ENCODE measurements at regions of chr4 and their contacts with region 1.

Region 1: GRCh38 chr4:70651864-70652506 is 14.3 kb downstream of the JCHAIN start:
- DNase-seq: peak; percentile 52
- ATAC-seq: peak; percentile 83
- H3K4me3 ChIP-seq: peak overlapping the region; percentile 24 to 54
- H3K27ac ChIP-seq: no peak overlapping the region
- H3K4me1 ChIP-seq: peaks cover 3 to 5% of the 10 kb centered on the region in 2 experiments; a peak in 2 of 4 replicates
- H3K27me3 ChIP-seq: no peaks in the 10 kb centered on the region
- CTCF ChIP-seq: peak; percentile 26 to 74 (median 61); a peak in 4 of 6 replicates
- POLR2A ChIP-seq: no peak
- RAD21 ChIP-seq: peak; percentile 78

Region 2: DNA sequence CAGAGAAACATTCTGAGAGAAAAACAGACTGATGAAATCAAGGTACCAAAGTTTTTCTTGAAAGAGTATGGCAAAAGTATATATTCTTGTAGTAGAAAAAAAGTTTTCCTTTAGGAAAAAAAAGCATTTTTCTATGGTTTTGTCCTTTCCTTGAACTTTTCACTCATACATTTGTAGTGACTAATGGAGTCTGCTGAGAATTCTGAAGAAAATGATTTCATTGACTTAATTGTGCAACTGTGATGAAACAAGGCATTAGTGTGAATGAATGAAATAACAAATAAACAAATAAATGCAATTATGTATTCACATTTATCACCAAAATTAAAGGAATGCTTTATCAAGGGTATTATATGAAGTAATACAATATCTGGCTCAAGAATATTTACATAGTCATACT is 715.4 kb before region 1 on chr4:
- CTCF ChIA-PET with region 1: no interaction called
- POLR2A ChIA-PET with region 1: no interaction called
- RAD21 ChIA-PET with region 1: no interaction called
- intact Hi-C with region 1: no loop called
- DNase-seq: no peak
- ATAC-seq: no peak
- H3K4me3 ChIP-seq: no peak overlapping the region
- H3K27ac ChIP-seq: no peak overlapping the region
- H3K4me1 ChIP-seq: no peaks in the 10 kb centered on the region
- H3K27me3 ChIP-seq: no peaks in the 10 kb centered on the region
- CTCF ChIP-seq: no peak
- POLR2A ChIP-seq: no peak
- RAD21 ChIP-seq: no peak

Region 3: GRCh38 chr4:70505151-70505748 is 146.7 kb before region 1 on chr4:
- CTCF ChIA-PET with region 1: no interaction called
- POLR2A ChIA-PET with region 1: no interaction called
- RAD21 ChIA-PET with region 1: no interaction called
- intact Hi-C with region 1: no loop called
- DNase-seq: peak; percentile 42
- ATAC-seq: peak; percentile 93
- H3K4me3 ChIP-seq: no peak overlapping the region
- H3K27ac ChIP-seq: no peak overlapping the region
- H3K4me1 ChIP-seq: no peaks in the 10 kb centered on the region
- H3K27me3 ChIP-seq: no peaks in the 10 kb centered on the region
- CTCF ChIP-seq: peak; percentile 63 to 97 (median 97)
- POLR2A ChIP-seq: no peak
- RAD21 ChIP-seq: peak; percentile 87

Region 4: DNA sequence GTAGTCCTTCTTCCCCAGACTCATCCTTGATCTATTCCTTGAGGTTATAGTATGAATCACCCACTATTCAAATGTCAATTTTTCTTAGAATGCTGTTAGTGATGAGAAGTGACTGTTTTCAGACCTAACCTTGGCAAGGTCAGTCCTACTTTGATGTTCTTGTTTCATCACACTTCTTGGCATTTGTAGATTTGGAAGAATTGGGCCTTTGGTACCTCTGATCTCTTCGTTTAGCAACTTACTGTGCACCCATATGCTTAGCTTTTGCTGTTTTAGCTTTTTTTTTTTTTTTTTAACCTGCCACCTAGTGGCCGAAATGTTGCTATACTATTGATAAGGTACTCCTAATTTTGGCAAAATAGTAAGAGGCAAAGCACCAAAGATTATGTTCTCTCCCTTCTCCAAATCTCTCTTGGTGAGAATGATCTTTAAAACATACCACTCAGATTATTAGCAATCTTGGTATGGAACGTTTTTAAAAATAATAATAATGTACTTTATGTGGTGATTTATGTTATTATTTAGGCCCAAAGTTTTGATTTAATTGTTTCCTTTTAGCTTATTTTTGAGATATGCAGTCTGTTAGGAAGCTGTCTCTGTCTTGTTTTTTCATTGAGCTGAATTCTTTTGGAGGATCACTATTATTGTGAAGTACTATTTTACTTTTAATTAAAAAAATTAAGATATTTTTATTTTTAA is 358.1 kb after region 1 on chr4:
- CTCF ChIA-PET with region 1: interaction called, 32 read pairs
- POLR2A ChIA-PET with region 1: no interaction called
- RAD21 ChIA-PET with region 1: no interaction called
- intact Hi-C with region 1: loop called (anchors 1 kb)
- DNase-seq: peak; percentile 39
- ATAC-seq: peak; percentile 63; the same call in 1 of the 2 replicates
- H3K4me3 ChIP-seq: no peak overlapping the region
- H3K27ac ChIP-seq: no peak overlapping the region
- H3K4me1 ChIP-seq: peaks cover 0 to 6% of the 10 kb centered on the region in 2 experiments; a peak in 2 of 4 replicates
- H3K27me3 ChIP-seq: no peaks in the 10 kb centered on the region
- CTCF ChIP-seq: peak; percentile 46 to 90 (median 52); a peak in 5 of 6 replicates
- POLR2A ChIP-seq: no peak
- RAD21 ChIP-seq: peak; percentile 50

Region 5: DNA sequence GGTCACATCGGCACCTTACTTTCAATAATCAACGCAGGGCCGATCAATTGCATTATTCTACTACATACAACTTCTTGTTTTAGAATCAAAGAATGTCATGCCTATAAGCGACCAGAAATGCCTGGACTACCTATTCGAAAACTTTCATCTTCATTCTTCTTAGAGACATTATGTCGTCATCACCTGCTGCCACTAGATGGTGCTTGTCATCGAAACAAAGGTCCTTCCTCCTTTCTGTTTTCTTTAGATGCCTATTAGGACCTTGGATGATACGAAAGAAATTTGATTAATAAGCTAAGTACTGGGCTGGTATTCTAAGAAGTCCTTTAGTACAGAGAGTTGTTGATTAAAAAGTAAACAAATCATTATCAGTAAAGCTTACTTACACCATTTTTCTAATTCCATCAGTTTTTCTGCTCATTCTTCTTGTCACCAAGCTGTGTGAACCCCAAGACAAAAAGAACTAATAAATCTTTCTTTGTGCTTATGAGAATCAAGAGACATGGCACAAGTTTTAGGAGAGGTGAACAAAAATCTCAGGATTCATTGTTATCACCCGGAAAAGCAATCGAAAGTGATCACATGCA is 532.3 kb after region 1 on chr4:
- CTCF ChIA-PET with region 1: no interaction called
- POLR2A ChIA-PET with region 1: no interaction called
- RAD21 ChIA-PET with region 1: no interaction called
- intact Hi-C with region 1: loop called (anchors 10 kb)
- DNase-seq: peak; percentile 63
- ATAC-seq: peak; percentile 51
- H3K4me3 ChIP-seq: no peak overlapping the region
- H3K27ac ChIP-seq: no peak overlapping the region
- H3K4me1 ChIP-seq: peaks cover 0 to 5% of the 10 kb centered on the region in 2 experiments; a peak in 1 of 4 replicates
- H3K27me3 ChIP-seq: peaks cover 15% of the 10 kb centered on the region; the same call in 1 of the 2 replicates
- CTCF ChIP-seq: peak; percentile 28 to 69 (median 57); a peak in 5 of 6 replicates
- POLR2A ChIP-seq: no peak
- RAD21 ChIP-seq: peak; percentile 54

Region 6: GRCh38 chr4:71553605-71554004 is 901.6 kb after region 1 on chr4:
- CTCF ChIA-PET with region 1: no interaction called
- POLR2A ChIA-PET with region 1: no interaction called
- RAD21 ChIA-PET with region 1: no interaction called
- intact Hi-C with region 1: loop called (anchors 2 kb)
- DNase-seq: peak; percentile 10
- ATAC-seq: peak; percentile 66
- H3K4me3 ChIP-seq: no peak overlapping the region
- H3K27ac ChIP-seq: no peak overlapping the region
- H3K4me1 ChIP-seq: no peaks in the 10 kb centered on the region
- H3K27me3 ChIP-seq: no peaks in the 10 kb centered on the region
- CTCF ChIP-seq: peak; percentile 11 to 50 (median 35); a peak in 4 of 6 replicates
- POLR2A ChIP-seq: no peak
- RAD21 ChIP-seq: peak; percentile 41

Measured in HCT116 (cell line).